ENCODE measurements at regions of chr20 and their contacts with region 1.

Region 1: GRCh38 chr20:19095762-19096161 is 116.7 kb upstream of the SLC24A3 start:
- DNase-seq: no peak
- H3K4me3 ChIP-seq: no peak overlapping the region
- H3K27ac ChIP-seq: no peak overlapping the region
- H3K4me1 ChIP-seq: peaks cover 18% of the 10 kb centered on the region
- H3K27me3 ChIP-seq: no peaks in the 10 kb centered on the region
- CTCF ChIP-seq: no peak

Region 2: GRCh38 chr20:19185090-19185489 is 89.3 kb after region 1 on chr20:
- intact Hi-C with region 1: loop called (anchors 10 kb)
- DNase-seq: no peak
- H3K4me3 ChIP-seq: no peak overlapping the region
- H3K27ac ChIP-seq: no peak overlapping the region
- H3K4me1 ChIP-seq: no peaks in the 10 kb centered on the region
- H3K27me3 ChIP-seq: no peaks in the 10 kb centered on the region
- CTCF ChIP-seq: no peak